ENCODE measurements at regions of chr3 and their contacts with region 1.

Region 1: GRCh38 chr3:39000008-39000450 is 51.7 kb downstream of the SCN11A start:
- DNase-seq: no peak
- ATAC-seq: peak; percentile 96
- H3K4me3 Mint-ChIP-seq: no peak overlapping the region
- H3K27ac Mint-ChIP-seq: no peak overlapping the region
- H3K4me1 Mint-ChIP-seq: peaks cover 8% of the 10 kb centered on the region
- H3K27me3 Mint-ChIP-seq: no peaks in the 10 kb centered on the region
- CTCF ChIP-seq: peak; percentile 39

Region 2: GRCh38 chr3:38651154-38651789 is 348.8 kb before region 1 on chr3:
- CTCF ChIA-PET with region 1: interaction called, 17 read pairs
- POLR2A ChIA-PET with region 1: no interaction called
- DNase-seq: peak; percentile 83
- ATAC-seq: peak; percentile 43
- H3K4me3 Mint-ChIP-seq: no peak overlapping the region
- H3K27ac Mint-ChIP-seq: no peak overlapping the region
- H3K4me1 Mint-ChIP-seq: peaks cover 10% of the 10 kb centered on the region
- H3K27me3 Mint-ChIP-seq: peaks cover 15% of the 10 kb centered on the region
- CTCF ChIP-seq: peak; percentile 98

Region 3: GRCh38 chr3:38725726-38726419 is 274.2 kb before region 1 on chr3:
- CTCF ChIA-PET with region 1: interaction called, 11 read pairs
- POLR2A ChIA-PET with region 1: no interaction called
- DNase-seq: no peak
- ATAC-seq: no peak
- H3K4me3 Mint-ChIP-seq: no peak overlapping the region
- H3K27ac Mint-ChIP-seq: no peak overlapping the region
- H3K4me1 Mint-ChIP-seq: peaks cover 15% of the 10 kb centered on the region
- H3K27me3 Mint-ChIP-seq: no peaks in the 10 kb centered on the region
- CTCF ChIP-seq: no peak

Region 4: DNA sequence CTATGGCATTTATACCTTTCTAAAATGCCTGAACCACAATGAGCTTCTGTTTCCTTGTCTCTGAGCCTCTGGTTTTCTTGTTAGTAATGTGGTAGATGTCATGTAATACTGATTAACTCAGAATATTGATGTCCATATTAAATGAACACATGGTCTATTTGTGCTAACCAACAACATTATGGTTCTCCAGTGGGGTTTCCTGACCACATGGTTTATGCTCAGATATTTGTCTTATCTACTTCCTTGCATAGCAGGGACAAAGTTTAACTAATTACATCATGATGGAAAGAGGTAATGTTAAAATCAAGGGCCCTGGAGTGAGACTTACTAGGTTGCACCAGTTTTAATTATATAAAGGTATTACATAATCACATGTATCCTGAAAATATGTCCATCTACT is 121.4 kb before region 1 on chr3:
- CTCF ChIA-PET with region 1: interaction called, 12 read pairs
- POLR2A ChIA-PET with region 1: no interaction called
- DNase-seq: no peak
- ATAC-seq: no peak
- H3K4me3 Mint-ChIP-seq: no peak overlapping the region
- H3K27ac Mint-ChIP-seq: no peak overlapping the region
- H3K4me1 Mint-ChIP-seq: no peaks in the 10 kb centered on the region
- H3K27me3 Mint-ChIP-seq: no peaks in the 10 kb centered on the region
- CTCF ChIP-seq: no peak

Region 5: DNA sequence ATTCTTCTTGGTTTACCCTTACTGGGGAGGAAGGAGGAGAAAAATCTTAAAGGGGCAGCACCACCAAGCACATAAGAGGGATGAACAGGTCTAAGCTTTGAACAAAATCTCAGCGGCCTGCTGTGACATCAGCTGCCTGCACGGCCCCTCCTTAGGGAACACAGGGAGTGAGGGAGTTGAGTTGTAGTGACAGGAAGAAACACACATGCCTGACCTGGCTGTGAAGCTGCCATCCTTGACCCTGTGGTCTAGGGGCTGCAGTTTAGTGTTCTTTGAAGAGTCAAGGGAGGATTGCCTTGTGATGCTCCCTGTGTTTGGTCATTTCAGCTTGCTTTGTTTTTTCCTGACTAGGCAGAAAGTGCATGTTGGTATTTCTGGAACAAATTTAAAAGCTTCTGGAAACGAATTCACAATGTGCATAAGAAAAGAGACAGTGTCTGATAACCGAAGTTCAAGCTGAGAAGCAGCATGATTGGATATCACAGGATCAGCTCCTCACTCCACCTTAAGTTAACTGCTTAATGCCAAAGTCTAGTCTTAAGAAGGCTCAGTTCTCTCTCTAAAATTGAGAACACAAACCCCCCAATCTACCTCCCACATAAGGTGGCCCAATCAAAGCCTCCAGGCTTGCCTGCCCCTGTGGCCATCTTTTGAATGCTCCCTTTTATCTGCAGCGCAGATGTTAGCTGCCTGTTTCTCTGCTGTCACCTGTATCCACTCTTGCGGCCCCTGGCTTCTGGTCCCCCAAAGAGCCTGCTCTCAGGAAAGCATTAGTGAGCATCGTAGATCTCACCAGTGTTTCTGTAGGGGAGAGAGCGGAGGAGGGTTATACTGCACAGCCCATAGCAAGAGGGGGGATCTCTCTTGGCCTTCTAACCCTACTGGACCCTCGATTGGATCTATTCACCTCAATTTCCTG is 30.5 kb before region 1 on chr3:
- CTCF ChIA-PET with region 1: interaction called, 10 read pairs
- POLR2A ChIA-PET with region 1: interaction called, 3 read pairs
- DNase-seq: no peak
- ATAC-seq: peak; percentile 46
- H3K4me3 Mint-ChIP-seq: no peak overlapping the region
- H3K27ac Mint-ChIP-seq: no peak overlapping the region
- H3K4me1 Mint-ChIP-seq: peaks cover 11% of the 10 kb centered on the region
- H3K27me3 Mint-ChIP-seq: no peaks in the 10 kb centered on the region
- CTCF ChIP-seq: no peak

Region 6: GRCh38 chr3:39013289-39013688 is 13.3 kb after region 1 on chr3:
- CTCF ChIA-PET with region 1: interaction called, 23 read pairs
- POLR2A ChIA-PET with region 1: no interaction called
- DNase-seq: peak; percentile 36
- ATAC-seq: peak; percentile 97
- H3K4me3 Mint-ChIP-seq: no peak overlapping the region
- H3K27ac Mint-ChIP-seq: no peak overlapping the region
- H3K4me1 Mint-ChIP-seq: peaks cover 11% of the 10 kb centered on the region
- H3K27me3 Mint-ChIP-seq: no peaks in the 10 kb centered on the region; the same call in 1 of the 2 replicates
- CTCF ChIP-seq: no peak

Region 7: GRCh38 chr3:39141171-39141995 is 141.4 kb after region 1 on chr3:
- CTCF ChIA-PET with region 1: no interaction called
- POLR2A ChIA-PET with region 1: no interaction called
- DNase-seq: no peak
- ATAC-seq: no peak
- H3K4me3 Mint-ChIP-seq: no peak overlapping the region
- H3K27ac Mint-ChIP-seq: no peak overlapping the region
- H3K4me1 Mint-ChIP-seq: peaks cover 9% of the 10 kb centered on the region
- H3K27me3 Mint-ChIP-seq: no peaks in the 10 kb centered on the region
- CTCF ChIP-seq: no peak

Measured in WTC11 (cell line).